PC-9 (cell line): ENCODE measurements at regions of chr13 and their contacts with region 1.

Region 1: GRCh38 chr13:66689628-66690027 is 540.5 kb downstream of the PCDH9 start:
- DNase-seq: no peak
- H3K4me3 ChIP-seq: no peak overlapping the region
- H3K27ac ChIP-seq: no peak overlapping the region
- H3K4me1 ChIP-seq: no peaks in the 10 kb centered on the region
- H3K27me3 ChIP-seq: no peaks in the 10 kb centered on the region
- CTCF ChIP-seq: no peak

Region 2: DNA sequence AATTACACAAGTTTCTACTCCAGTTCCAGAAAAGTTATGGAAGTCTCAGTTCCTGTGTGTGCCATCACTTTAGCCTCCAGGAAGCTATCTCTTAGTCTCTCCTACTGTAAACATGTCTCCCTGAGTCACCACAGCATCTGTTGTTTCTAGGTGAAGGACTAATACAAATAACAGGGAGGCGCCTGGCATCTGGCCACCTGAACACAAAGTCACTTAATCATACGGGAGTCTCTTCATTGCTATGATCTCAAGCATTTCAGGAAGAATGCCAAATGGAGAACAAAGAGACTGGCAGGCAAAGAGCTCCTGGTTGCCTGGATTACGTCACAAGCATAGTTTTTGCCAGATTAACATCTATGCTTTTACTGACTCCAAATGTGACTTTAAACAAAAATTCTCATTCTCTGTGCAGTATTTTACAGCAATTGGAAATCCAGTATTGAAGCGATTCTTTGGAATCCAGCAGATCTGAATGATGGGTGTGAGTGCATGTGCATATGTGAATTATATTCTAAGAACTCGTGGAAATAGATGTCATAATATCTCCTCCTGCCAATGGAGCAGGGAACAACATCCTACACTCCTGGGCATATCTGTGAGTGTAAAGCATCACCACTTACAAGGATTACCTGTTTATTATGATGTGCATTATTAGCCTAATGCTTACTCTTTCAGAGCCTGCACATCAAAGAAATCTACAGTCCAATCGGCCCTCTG is 32.3 kb before region 1 on chr13:
- CTCF ChIA-PET with region 1: no interaction called
- POLR2A ChIA-PET with region 1: no interaction called
- intact Hi-C with region 1: no loop called
- DNase-seq: peak; percentile 89 to 91
- H3K4me3 ChIP-seq: no peak overlapping the region
- H3K27ac ChIP-seq: peak overlapping the region; percentile 42; the same call in 1 of the 2 replicates
- H3K4me1 ChIP-seq: peaks cover 6% of the 10 kb centered on the region; the same call in 1 of the 2 replicates
- H3K27me3 ChIP-seq: no peaks in the 10 kb centered on the region
- CTCF ChIP-seq: no peak

Region 3: DNA sequence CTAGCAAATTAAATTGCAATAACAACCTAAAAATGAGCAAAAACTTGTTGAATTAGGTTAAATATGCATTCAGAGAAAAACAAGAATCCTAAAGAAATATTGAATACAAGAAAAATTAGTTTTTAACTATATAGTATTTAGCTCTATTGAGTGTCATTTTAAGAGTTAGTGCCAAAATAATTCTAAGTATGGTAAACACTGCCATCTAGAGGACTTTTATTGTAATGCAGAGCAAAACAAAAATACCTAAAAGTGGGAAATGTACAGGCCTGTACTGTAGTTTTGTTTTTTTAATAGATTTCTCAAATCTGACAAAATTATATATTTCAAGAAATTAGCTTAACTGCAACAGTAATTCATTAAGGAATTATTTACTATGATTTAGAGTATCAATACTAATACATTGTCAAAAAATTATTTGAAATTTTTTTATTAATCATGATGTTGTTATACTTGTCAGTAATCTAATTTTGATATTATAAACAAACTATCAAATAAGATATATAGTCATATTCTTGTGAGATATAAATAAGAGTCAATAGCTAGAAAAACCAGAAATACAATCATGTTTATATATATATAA is 548.7 kb after region 1 on chr13:
- CTCF ChIA-PET with region 1: no interaction called
- POLR2A ChIA-PET with region 1: no interaction called
- intact Hi-C with region 1: loop called (anchors 5 kb)
- DNase-seq: no peak
- H3K4me3 ChIP-seq: no peak overlapping the region
- H3K27ac ChIP-seq: no peak overlapping the region
- H3K4me1 ChIP-seq: no peaks in the 10 kb centered on the region
- H3K27me3 ChIP-seq: no peaks in the 10 kb centered on the region
- CTCF ChIP-seq: peak; percentile 80

Region 4: GRCh38 chr13:67258482-67258881 is 568.9 kb after region 1 on chr13:
- CTCF ChIA-PET with region 1: no interaction called
- POLR2A ChIA-PET with region 1: no interaction called
- intact Hi-C with region 1: no loop called
- DNase-seq: no peak
- H3K4me3 ChIP-seq: no peak overlapping the region
- H3K27ac ChIP-seq: no peak overlapping the region
- H3K4me1 ChIP-seq: no peaks in the 10 kb centered on the region
- H3K27me3 ChIP-seq: no peaks in the 10 kb centered on the region
- CTCF ChIP-seq: no peak